Naive thymus-derived CD4-positive, alpha-beta T cell (primary cell): ENCODE measurements at regions of chr1 and their contacts with region 1.

Region 1: GRCh38 chr1:1890506-1891348 is at the start of gene GNB1:
- DNase-seq: peak; percentile 80 to 96 (median 93)
- ATAC-seq: peak; percentile 88
- H3K4me3 ChIP-seq: peak within 1 kb of the TSS; percentile 64
- H3K4me3 Mint-ChIP-seq: peak within 1 kb of the TSS; percentile 83 to 100 (median 90)
- H3K27ac ChIP-seq: peak within 1 kb of the TSS; percentile 96
- H3K27ac Mint-ChIP-seq: peak within 1 kb of the TSS; percentile 89 to 98 (median 95)
- H3K4me1 ChIP-seq: peaks cover 36 to 52% of the 10 kb centered on the region in 2 donors
- H3K4me1 Mint-ChIP-seq: peaks cover 41 to 76% (median 61%) of the 10 kb centered on the region in 7 donors
- H3K27me3 ChIP-seq: no peaks in the 10 kb centered on the region
- H3K27me3 Mint-ChIP-seq: peaks cover 0 to under 1% (median 0%) of the 10 kb centered on the region in 5 donors
- total RNA-seq, gene GNB1: 170 to 358 (median 246) TPM

Region 2: GRCh38 chr1:1730870-1731269 is 159.9 kb before region 1 on chr1:
- CTCF ChIA-PET with region 1: no interaction called
- POLR2A ChIA-PET with region 1: no interaction called
- intact Hi-C with region 1: no loop called
- DNase-seq: no peak
- ATAC-seq: no peak
- H3K4me3 ChIP-seq: no peak overlapping the region
- H3K4me3 Mint-ChIP-seq: no peak overlapping the region
- H3K27ac ChIP-seq: no peak overlapping the region
- H3K27ac Mint-ChIP-seq: peak overlapping the region in 2 of 9 donors; percentile 36 to 52
- H3K4me1 ChIP-seq: peaks cover 3 to 6% of the 10 kb centered on the region in 2 donors
- H3K4me1 Mint-ChIP-seq: peaks cover 0 to 22% (median 13%) of the 10 kb centered on the region in 7 donors
- H3K27me3 ChIP-seq: no peaks in the 10 kb centered on the region
- H3K27me3 Mint-ChIP-seq: no peaks in the 10 kb centered on the region

Region 3: GRCh38 chr1:1841575-1841995 is 49.1 kb before region 1 on chr1:
- CTCF ChIA-PET with region 1: interaction called, 4 read pairs
- POLR2A ChIA-PET with region 1: no interaction called
- intact Hi-C with region 1: loop called in 1 of 2 experiments (anchors 5 kb)
- DNase-seq: no peak
- ATAC-seq: no peak
- H3K4me3 ChIP-seq: no peak overlapping the region
- H3K4me3 Mint-ChIP-seq: peak overlapping the region; percentile 29 to 78 (median 62)
- H3K27ac ChIP-seq: peak overlapping the region; percentile 30
- H3K27ac Mint-ChIP-seq: peak overlapping the region; percentile 51 to 89 (median 80)
- H3K4me1 ChIP-seq: peaks cover 5 to 13% of the 10 kb centered on the region in 2 donors
- H3K4me1 Mint-ChIP-seq: peaks cover 27 to 67% (median 59%) of the 10 kb centered on the region in 7 donors
- H3K27me3 ChIP-seq: no peaks in the 10 kb centered on the region
- H3K27me3 Mint-ChIP-seq: no peaks in the 10 kb centered on the region